HAP-1 (cell line): ENCODE measurements at regions of chr11 and their contacts with region 1.

Region 1: DNA sequence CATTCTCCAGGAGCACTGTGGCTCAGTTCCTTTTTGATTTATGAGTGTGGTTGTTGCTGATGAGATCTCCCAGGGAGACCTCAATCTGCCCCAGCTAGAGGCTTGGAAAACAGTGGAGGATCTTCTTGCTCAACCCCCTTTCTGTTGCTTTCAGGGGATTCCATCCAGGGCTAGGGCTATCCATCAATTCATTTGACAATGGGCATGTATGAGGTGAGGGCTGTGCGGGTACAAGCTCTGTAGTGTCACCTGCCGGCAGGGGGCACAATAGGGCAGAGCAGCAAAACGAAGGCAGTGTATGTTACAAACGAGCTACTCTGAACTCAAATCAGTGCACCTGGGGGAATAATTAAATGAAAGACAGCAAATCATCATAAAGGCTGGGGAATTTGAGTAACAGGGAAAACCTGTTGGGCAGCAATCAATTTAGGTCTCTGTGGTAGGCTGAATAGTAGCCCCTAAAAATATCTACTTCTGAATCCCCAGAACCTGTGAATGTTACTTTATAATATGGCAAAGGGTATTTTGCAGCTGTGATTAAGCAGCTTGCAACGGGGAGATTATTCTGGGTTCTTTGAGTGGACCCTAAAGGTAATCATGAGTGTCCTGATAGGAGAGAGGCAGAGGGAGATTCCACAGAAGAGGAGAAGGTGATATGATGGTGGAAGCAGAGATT is 170.3 kb upstream of the ZBED5 start:
- DNase-seq: peak; percentile 51 to 88
- H3K4me3 ChIP-seq: no peak overlapping the region
- H3K4me1 ChIP-seq: no peaks in the 10 kb centered on the region
- H3K27me3 ChIP-seq: no peaks in the 10 kb centered on the region; the same call in 1 of the 2 replicates

Region 2: DNA sequence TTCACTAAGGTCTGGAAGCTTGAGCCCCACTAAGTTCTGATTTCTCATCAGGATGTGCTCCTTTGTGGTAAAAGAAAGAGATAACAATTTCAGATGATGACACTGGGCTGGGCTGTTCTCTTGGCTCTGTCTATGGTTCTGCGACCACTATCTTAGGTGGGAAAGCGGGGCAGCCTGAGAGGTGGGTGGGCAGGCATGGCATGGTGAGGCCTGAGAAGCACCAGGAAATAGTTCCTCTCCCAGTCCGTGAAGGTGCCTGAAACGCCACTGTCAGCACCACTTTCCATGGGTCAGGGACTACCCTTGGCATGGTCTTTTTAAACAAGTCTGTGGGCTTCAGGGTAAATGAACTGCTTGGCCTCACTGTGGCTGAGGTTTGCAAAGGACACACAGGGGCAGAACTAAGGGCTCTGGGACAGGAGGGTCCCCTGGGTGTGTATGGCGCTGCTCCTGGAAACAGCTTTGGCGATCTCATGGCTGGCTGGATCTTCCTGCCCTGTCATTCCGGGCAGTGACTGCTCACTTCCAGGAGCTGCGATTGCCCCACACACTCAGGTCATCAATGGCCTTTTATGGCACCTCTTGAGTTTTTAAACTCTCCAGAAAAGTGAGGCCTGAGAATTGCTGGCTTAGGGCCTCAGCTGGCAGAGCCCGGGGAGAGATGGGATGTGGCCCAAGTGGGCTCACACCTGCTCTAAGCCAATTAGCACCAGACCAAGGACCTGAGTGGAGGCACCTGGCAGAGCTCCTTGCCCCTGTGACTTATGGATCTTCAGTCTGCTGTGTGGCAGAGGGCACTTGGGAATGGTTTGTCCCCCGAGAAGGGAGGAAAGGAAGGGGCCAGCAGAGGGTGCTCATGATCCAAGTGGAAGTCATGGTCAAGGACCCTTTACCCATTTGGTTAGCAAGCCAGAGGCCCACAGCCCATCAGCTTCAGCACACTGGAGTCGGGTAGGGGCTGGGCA is 404.1 kb before region 1 on chr11:
- in situ Hi-C with region 1: no loop called
- DNase-seq: peak in 1 of 2 experiments; percentile 60
- H3K4me3 ChIP-seq: no peak overlapping the region
- H3K4me1 ChIP-seq: no peaks in the 10 kb centered on the region
- H3K27me3 ChIP-seq: peaks cover 3% of the 10 kb centered on the region; the same call in 1 of the 2 replicates

Region 3: DNA sequence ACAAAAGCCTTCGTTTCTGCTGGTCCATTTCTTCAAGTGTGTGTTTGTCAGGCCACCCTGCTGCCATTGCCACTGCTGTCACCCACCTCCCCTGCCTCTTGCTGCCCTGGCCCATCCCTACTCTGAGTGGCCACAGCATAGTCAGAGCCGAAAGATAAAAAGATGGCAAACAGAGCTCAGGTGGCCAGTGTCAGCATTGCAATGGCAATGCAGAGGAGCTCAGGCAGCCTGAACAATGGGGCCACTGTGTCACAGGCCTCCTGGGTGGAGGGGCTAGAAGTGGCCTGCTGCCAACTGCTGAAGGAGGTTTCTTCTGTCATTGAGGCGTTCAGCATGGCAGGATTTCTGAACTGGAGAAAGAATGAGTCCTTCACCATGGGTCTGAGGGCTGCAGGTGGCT is 187.8 kb after region 1 on chr11:
- in situ Hi-C with region 1: no loop called
- DNase-seq: no peak
- H3K4me3 ChIP-seq: no peak overlapping the region
- H3K4me1 ChIP-seq: no peaks in the 10 kb centered on the region
- H3K27me3 ChIP-seq: peaks cover 1% of the 10 kb centered on the region; the same call in 1 of the 2 replicates

Region 4: GRCh38 chr11:11265994-11266606 is 237.9 kb after region 1 on chr11:
- in situ Hi-C with region 1: loop called (anchors 10 kb)
- DNase-seq: peak; percentile 28 to 77
- H3K4me3 ChIP-seq: no peak overlapping the region
- H3K4me1 ChIP-seq: no peaks in the 10 kb centered on the region
- H3K27me3 ChIP-seq: no peaks in the 10 kb centered on the region